WTC11 (cell line): ENCODE measurements at regions of chr4 and their contacts with region 1.

Region 1: GRCh38 chr4:15805583-15806517 is 27.7 kb downstream of the CD38 start:
- DNase-seq: peak; percentile 28
- ATAC-seq: peak; percentile 90
- H3K4me3 Mint-ChIP-seq: no peak overlapping the region
- H3K27ac Mint-ChIP-seq: no peak overlapping the region
- H3K4me1 Mint-ChIP-seq: peaks cover 2% of the 10 kb centered on the region; the same call in 1 of the 2 replicates
- H3K27me3 Mint-ChIP-seq: no peaks in the 10 kb centered on the region
- CTCF ChIP-seq: peak; percentile 53

Region 2: DNA sequence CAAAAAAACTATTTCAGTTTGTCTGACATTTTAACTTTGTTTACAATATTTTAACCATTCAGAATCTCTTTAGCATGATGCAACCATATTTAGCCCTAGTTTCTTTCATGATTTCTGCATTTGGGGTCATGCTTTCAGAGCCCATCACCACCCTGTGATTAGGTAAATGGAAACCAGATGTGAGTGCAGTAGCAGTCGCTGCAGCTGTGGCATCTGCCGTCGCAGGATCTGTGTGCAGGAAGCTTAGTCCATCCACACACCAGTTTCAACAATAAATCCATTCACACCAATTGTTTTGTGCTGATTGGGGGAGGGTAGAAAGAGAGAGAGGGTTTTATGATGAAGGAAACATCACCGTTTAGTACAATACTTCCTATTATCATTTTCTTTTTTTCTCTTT is 673.1 kb before region 1 on chr4:
- CTCF ChIA-PET with region 1: no interaction called
- POLR2A ChIA-PET with region 1: no interaction called
- DNase-seq: no peak
- ATAC-seq: no peak
- H3K4me3 Mint-ChIP-seq: no peak overlapping the region
- H3K27ac Mint-ChIP-seq: peak overlapping the region; percentile 80; the same call in 1 of the 2 replicates
- H3K4me1 Mint-ChIP-seq: peaks cover 6% of the 10 kb centered on the region
- H3K27me3 Mint-ChIP-seq: peaks cover 6% of the 10 kb centered on the region; the same call in 1 of the 2 replicates
- CTCF ChIP-seq: no peak

Region 3: DNA sequence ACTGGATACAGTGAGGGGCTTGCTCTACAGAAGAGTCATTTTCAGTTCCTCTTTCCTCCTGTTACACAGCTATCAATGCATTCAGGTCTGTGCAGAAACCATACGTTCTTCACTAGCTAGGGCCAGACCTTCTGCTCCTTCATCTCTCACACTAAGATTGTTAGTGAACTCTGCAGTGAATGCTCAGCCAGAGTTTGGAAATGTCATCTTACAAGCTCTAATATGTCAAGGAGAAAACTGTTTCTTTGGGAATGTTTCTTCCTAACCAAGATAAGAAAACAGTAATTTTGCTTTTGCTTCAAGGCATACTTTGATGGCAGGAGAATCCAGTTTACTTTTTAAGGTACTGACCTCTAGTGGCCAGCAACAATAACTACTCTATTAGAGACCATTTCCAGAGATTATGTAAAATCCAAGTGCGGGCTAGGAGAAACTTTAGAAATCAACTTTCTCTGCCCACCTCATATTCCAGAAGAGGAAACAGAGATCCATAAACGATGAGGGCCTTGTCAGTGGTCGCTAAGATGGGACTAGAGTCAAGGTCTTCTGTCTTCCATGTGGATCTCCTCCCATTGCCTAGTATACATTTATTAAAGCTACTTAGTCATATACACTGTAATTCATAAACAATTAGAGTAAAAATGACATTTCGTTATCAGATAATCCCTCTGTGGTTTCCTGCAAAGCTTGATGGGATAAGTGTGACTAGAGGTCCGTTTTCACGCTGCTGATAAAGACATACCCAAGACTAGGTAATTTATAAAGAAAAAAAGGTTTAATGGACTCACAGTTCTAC is 348.2 kb before region 1 on chr4:
- CTCF ChIA-PET with region 1: no interaction called
- POLR2A ChIA-PET with region 1: no interaction called
- DNase-seq: no peak
- ATAC-seq: peak; percentile 74
- H3K4me3 Mint-ChIP-seq: no peak overlapping the region
- H3K27ac Mint-ChIP-seq: no peak overlapping the region
- H3K4me1 Mint-ChIP-seq: no peaks in the 10 kb centered on the region; the same call in 1 of the 2 replicates
- H3K27me3 Mint-ChIP-seq: no peaks in the 10 kb centered on the region
- CTCF ChIP-seq: peak; percentile 47; the same call in 1 of the 2 replicates

Region 4: DNA sequence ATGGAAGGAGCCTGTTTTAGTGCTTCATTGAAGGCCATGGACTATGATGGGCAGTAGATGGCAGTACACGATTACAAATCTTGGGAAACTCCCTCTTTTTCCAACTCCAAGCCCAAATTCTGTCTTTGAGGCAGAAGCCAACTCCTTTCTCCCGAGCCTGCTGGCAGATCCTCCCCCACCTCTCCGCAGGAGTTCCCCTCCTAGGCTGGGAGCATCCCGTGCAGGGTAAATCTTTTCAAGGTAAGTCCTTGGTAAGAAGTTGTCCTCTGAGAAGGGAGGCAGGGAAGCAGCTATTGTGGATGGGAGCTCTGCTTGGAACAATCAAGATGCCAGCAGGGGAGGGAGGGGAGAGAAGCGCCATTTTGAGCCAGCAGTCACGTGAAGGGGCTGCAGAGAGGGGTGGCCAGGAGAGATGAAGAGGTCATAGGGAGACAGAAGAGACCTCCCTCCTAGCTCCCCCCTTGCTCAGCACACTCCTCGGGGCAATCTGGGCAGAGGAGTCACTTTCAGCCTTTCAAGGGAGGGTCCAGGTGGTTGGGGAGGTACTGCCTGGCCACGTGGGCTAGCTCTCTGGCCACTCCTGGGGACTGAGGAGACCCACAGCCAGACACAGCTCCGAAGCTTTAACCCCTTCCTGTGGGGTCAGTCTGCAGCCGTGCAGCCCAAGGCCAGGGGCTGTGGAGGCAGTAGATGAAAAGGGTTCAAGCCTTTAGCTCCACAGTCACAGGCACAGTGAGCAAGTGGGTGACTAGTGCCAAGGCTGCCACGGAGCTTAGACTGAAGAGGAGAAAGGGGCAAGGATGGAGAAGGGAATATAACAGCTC is 326.5 kb before region 1 on chr4:
- CTCF ChIA-PET with region 1: interaction called, 30 read pairs
- POLR2A ChIA-PET with region 1: no interaction called
- DNase-seq: peak; percentile 58
- ATAC-seq: peak; percentile 90
- H3K4me3 Mint-ChIP-seq: peak overlapping the region; percentile 82
- H3K27ac Mint-ChIP-seq: peak overlapping the region; percentile 95
- H3K4me1 Mint-ChIP-seq: peaks cover 13% of the 10 kb centered on the region
- H3K27me3 Mint-ChIP-seq: no peaks in the 10 kb centered on the region
- CTCF ChIP-seq: no peak; the same call in 1 of the 2 replicates

Region 5: GRCh38 chr4:15848191-15848842 is 42.5 kb after region 1 on chr4:
- CTCF ChIA-PET with region 1: interaction called, 21 read pairs
- POLR2A ChIA-PET with region 1: no interaction called
- DNase-seq: no peak
- ATAC-seq: no peak
- H3K4me3 Mint-ChIP-seq: no peak overlapping the region
- H3K27ac Mint-ChIP-seq: no peak overlapping the region
- H3K4me1 Mint-ChIP-seq: peaks cover 4% of the 10 kb centered on the region
- H3K27me3 Mint-ChIP-seq: no peaks in the 10 kb centered on the region; the same call in 1 of the 2 replicates
- CTCF ChIP-seq: no peak

Region 6: GRCh38 chr4:15956179-15956850 is 150.5 kb after region 1 on chr4:
- CTCF ChIA-PET with region 1: interaction called, 180 read pairs
- POLR2A ChIA-PET with region 1: no interaction called
- DNase-seq: peak; percentile 92
- ATAC-seq: peak; percentile 95
- H3K4me3 Mint-ChIP-seq: no peak overlapping the region
- H3K27ac Mint-ChIP-seq: no peak overlapping the region
- H3K4me1 Mint-ChIP-seq: peaks cover 12% of the 10 kb centered on the region
- H3K27me3 Mint-ChIP-seq: 0 out of 2 replicates have a peak, but pooled peaks cover 4% of the 10 kb centered on the region
- CTCF ChIP-seq: peak; percentile 84

Region 7: DNA sequence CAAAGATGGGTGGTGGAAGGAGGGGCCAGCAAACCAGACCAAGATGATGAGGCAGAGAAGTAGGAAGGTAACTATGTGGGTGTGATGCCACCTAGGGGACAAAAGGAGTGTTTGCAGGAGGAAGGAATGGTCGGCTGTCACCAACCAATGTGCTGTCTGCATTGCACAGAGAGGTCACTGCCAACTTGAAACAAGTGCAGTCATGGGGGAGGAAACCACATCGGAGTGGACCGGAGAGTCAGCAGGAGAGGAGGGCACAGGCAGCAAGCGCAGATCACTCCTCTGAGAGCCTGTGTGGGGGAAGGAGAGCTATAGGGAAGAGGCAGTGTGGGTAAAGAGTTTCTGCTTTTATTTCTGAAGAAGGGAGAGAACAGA is 195.6 kb after region 1 on chr4:
- CTCF ChIA-PET with region 1: interaction called, 13 read pairs
- POLR2A ChIA-PET with region 1: no interaction called
- DNase-seq: peak; percentile 59
- ATAC-seq: peak; percentile 97
- H3K4me3 Mint-ChIP-seq: no peak overlapping the region
- H3K27ac Mint-ChIP-seq: no peak overlapping the region
- H3K4me1 Mint-ChIP-seq: no peaks in the 10 kb centered on the region
- H3K27me3 Mint-ChIP-seq: no peaks in the 10 kb centered on the region
- CTCF ChIP-seq: peak; percentile 71

Region 8: GRCh38 chr4:16264798-16265197 is 458.9 kb after region 1 on chr4:
- CTCF ChIA-PET with region 1: interaction called, 14 read pairs
- POLR2A ChIA-PET with region 1: no interaction called
- DNase-seq: no peak
- ATAC-seq: no peak
- H3K4me3 Mint-ChIP-seq: no peak overlapping the region
- H3K27ac Mint-ChIP-seq: no peak overlapping the region
- H3K4me1 Mint-ChIP-seq: no peaks in the 10 kb centered on the region
- H3K27me3 Mint-ChIP-seq: no peaks in the 10 kb centered on the region
- CTCF ChIP-seq: no peak